Heart left ventricle (tissue), 16 donors: ENCODE measurements at regions of chr6 and their contacts with region 1.

Region 1: GRCh38 chr6:17584241-17584803 is 15.8 kb upstream of the FAM8A1 start:
- DNase-seq: peak in 2 of 5 donors; percentile 43 to 52
- ATAC-seq: peak; percentile 77 to 90 (median 86)
- H3K4me3 ChIP-seq: peak overlapping the region in 9 of 12 donors; percentile 12 to 48 (median 34)
- H3K27ac ChIP-seq: peak overlapping the region in 11 of 12 donors; percentile 22 to 78 (median 74)
- H3K4me1 ChIP-seq: peaks cover 0 to 20% (median 8%) of the 10 kb centered on the region in 12 donors
- H3K27me3 ChIP-seq: peaks cover 0 to 4% (median 0%) of the 10 kb centered on the region in 9 donors
- CTCF ChIP-seq: peak; percentile 59 to 92 (median 82)
- POLR2A ChIP-seq: no peak

Region 2: DNA sequence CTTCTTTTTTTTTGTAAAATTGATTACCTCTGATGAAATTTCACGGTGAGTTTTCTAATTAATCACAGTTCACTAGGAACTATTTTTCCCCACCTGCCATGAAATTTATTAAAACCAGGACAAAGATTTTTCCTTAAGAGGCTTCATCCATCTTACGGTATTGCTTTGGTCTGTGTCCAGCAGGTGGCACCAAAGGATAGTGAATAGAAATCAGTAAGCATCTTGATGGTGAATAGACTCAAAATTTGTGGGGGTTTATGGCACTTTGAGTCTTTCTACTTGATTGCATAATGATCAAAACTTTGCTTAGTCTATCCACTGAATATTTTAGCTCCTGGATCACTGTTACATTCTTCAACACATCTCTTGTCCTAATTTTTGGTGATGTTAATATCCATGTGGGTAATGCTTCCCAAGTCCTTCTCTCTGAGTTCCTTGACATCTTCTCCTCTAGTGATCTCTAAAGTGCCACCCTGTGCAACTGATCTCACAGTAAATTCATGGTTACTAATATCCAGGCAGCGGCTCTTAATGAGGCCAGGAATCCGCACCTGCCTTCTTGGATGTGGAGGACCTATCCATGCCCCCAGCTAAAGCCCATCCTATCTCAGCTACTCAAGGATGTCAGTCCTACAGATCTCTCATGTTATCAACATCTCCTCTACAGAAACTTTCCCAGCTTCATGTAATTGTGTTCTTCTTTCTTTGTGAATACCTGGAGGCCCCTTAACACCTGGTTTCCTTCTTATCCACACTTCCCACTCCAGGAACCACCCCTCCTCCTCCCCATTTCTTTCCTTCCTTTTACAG is 428.0 kb before region 1 on chr6:
- intact Hi-C with region 1: loop called (anchors 1 to 5 kb)
- DNase-seq: peak in 4 of 5 donors; percentile 36 to 58 (median 55)
- ATAC-seq: peak in 2 of 4 donors; percentile 42 to 57
- H3K4me3 ChIP-seq: no peak overlapping the region
- H3K27ac ChIP-seq: no peak overlapping the region
- H3K4me1 ChIP-seq: no peaks in the 10 kb centered on the region
- H3K27me3 ChIP-seq: no peaks in the 10 kb centered on the region
- CTCF ChIP-seq: peak; percentile 57 to 90 (median 80)
- POLR2A ChIP-seq: no peak

Region 3: DNA sequence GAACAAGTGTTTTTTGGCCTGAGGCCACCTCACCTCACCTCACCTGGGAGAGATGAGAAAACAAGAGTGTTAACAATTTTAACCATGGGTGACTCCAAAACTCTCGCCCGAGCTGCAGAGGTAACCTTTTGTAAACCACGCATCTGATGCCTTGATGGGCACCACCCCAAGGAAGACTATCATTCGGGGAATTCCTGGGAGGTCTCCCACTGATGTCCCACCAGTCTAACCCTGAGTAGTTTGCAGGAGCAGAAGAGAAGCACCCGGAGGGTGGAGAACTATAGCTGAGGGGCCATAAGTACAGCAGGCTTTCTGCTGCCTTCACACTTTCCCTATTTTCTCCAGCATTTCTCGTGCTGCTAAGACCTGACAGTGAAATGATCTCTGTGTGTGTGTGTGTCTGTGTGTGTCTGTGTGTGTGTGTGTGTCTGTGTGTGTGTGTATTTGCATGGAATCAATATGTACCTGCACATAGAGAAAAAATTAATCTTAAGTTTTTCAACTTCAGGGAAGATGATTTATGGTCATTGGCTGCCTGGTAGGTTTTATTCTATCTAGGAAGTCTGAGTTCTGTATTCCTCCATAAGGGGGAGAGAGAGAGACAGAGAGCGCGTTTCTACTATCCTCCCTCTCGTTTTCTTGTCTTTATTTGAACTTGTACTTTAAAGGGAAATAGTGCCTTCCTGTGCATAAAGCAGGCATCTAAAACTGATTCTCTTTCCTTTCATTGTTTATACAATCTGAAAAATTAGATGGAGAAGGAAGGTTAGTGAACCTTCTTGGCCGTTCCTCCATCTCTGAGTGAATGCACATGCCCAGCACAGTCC is 115.1 kb before region 1 on chr6:
- intact Hi-C with region 1: loop called in 2 of 10 experiments (anchors 10 kb)
- DNase-seq: no peak
- ATAC-seq: no peak
- H3K4me3 ChIP-seq: no peak overlapping the region
- H3K27ac ChIP-seq: peak overlapping the region in 1 of 12 donors; percentile 81
- H3K4me1 ChIP-seq: peaks cover 0 to 27% (median 6%) of the 10 kb centered on the region in 12 donors
- H3K27me3 ChIP-seq: no peaks in the 10 kb centered on the region
- CTCF ChIP-seq: peak in 7 of 12 donors; percentile 27 to 45 (median 33)
- POLR2A ChIP-seq: no peak

Region 4: GRCh38 chr6:17666646-17667045 is 82.3 kb after region 1 on chr6:
- intact Hi-C with region 1: no loop called
- DNase-seq: no peak
- ATAC-seq: no peak
- H3K4me3 ChIP-seq: no peak overlapping the region
- H3K27ac ChIP-seq: no peak overlapping the region
- H3K4me1 ChIP-seq: no peaks in the 10 kb centered on the region
- H3K27me3 ChIP-seq: no peaks in the 10 kb centered on the region
- CTCF ChIP-seq: no peak
- POLR2A ChIP-seq: no peak

Region 5: DNA sequence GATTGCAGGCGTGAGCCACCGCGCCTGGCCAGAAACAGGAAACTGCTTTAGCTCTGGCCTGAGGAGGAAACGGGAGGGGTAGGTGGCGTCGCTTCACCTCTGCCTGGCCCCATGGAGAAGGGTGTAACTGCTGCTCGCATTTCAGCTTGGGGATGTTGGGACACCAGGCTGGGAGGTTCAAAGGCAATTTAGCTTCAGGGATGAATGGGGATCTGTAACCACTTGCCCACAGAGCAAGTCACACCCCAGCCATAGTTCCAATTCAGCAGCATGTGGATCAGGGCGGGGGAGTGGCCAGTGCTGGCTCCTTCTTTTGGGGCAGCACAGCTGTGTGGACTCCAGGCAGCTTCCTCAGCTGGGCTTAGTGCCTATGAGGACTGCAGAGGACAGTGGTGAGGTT is 157.2 kb after region 1 on chr6:
- intact Hi-C with region 1: no loop called
- DNase-seq: no peak
- ATAC-seq: peak in 1 of 4 donors; percentile 31
- H3K4me3 ChIP-seq: no peak overlapping the region
- H3K27ac ChIP-seq: no peak overlapping the region
- H3K4me1 ChIP-seq: peaks cover 0 to 9% (median 0%) of the 10 kb centered on the region in 12 donors
- H3K27me3 ChIP-seq: no peaks in the 10 kb centered on the region
- CTCF ChIP-seq: no peak
- POLR2A ChIP-seq: no peak

Region 6: GRCh38 chr6:17790489-17790888 is 206.2 kb after region 1 on chr6:
- intact Hi-C with region 1: loop called in 1 of 10 experiments (anchors 10 kb)
- DNase-seq: no peak
- ATAC-seq: no peak
- H3K4me3 ChIP-seq: no peak overlapping the region
- H3K27ac ChIP-seq: no peak overlapping the region
- H3K4me1 ChIP-seq: no peaks in the 10 kb centered on the region
- H3K27me3 ChIP-seq: no peaks in the 10 kb centered on the region
- CTCF ChIP-seq: no peak
- POLR2A ChIP-seq: no peak

Region 7: GRCh38 chr6:17803409-17803808 is 219.1 kb after region 1 on chr6:
- intact Hi-C with region 1: loop called in 5 of 10 experiments (anchors 5 to 10 kb)
- DNase-seq: no peak
- ATAC-seq: no peak
- H3K4me3 ChIP-seq: no peak overlapping the region
- H3K27ac ChIP-seq: no peak overlapping the region
- H3K4me1 ChIP-seq: peaks cover 0 to 6% (median 0%) of the 10 kb centered on the region in 12 donors
- H3K27me3 ChIP-seq: no peaks in the 10 kb centered on the region
- CTCF ChIP-seq: no peak
- POLR2A ChIP-seq: no peak

Region 8: GRCh38 chr6:17808609-17809008 is 224.3 kb after region 1 on chr6:
- intact Hi-C with region 1: loop called in 5 of 10 experiments (anchors 5 to 10 kb)
- DNase-seq: no peak
- ATAC-seq: no peak
- H3K4me3 ChIP-seq: no peak overlapping the region
- H3K27ac ChIP-seq: no peak overlapping the region
- H3K4me1 ChIP-seq: peaks cover 0 to 6% (median 0%) of the 10 kb centered on the region in 12 donors
- H3K27me3 ChIP-seq: no peaks in the 10 kb centered on the region
- CTCF ChIP-seq: no peak
- POLR2A ChIP-seq: no peak

Region 9: DNA sequence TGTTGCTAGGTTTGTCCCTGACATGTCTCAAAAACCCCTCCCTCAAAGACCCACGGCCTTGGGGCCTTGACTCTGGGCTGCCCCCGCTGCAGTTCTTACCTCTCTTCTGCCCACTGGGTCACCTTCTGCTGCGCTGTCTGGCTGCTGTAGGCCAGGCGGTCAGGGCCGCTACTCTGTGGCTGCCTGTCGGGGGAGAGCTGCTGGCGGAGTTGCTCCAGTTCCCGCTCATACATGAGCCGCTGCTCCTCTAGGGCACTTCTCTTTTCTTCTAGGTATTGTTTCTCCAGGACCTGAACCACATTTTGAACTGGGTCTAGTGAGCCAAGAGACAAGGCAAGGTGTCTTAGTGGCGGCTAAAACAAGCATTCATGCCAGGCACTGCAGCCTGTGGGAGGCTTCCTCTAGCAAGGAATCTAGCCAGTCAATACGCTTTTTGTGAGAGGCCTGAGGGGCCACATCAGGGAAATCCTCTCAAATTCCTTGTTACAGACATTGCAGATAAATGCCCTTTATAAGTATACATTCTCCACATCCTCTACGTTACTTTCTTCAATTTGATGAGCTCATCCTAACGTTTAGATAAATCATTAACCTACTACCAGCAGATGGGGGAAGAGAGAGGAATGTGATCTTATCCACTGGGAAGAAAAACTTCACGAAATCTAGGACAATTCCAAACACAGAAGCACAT is 232.7 kb after region 1 on chr6:
- intact Hi-C with region 1: loop called in 1 of 10 experiments (anchors 10 kb)
- DNase-seq: no peak
- ATAC-seq: no peak
- H3K4me3 ChIP-seq: no peak overlapping the region
- H3K27ac ChIP-seq: no peak overlapping the region
- H3K4me1 ChIP-seq: peaks cover 0 to 5% (median 0%) of the 10 kb centered on the region in 12 donors
- H3K27me3 ChIP-seq: no peaks in the 10 kb centered on the region
- CTCF ChIP-seq: no peak
- POLR2A ChIP-seq: no peak